Naive thymus-derived CD4-positive, alpha-beta T cell (primary cell): ENCODE measurements at regions of chr2 and their contacts with region 1.

Region 1: GRCh38 chr2:237858294-237859081 is 935 bp upstream of the RAMP1 start:
- DNase-seq: peak in 7 of 9 donors; percentile 26 to 51 (median 44)
- ATAC-seq: peak; percentile 76
- H3K4me3 ChIP-seq: no peak overlapping the region
- H3K4me3 Mint-ChIP-seq: peak overlapping the region; percentile 46 to 86 (median 71)
- H3K27ac ChIP-seq: no peak overlapping the region
- H3K27ac Mint-ChIP-seq: peak overlapping the region in 2 of 9 donors; percentile 72 to 73
- H3K4me1 ChIP-seq: no peaks in the 10 kb centered on the region
- H3K4me1 Mint-ChIP-seq: peaks cover 0 to 15% (median 13%) of the 10 kb centered on the region in 7 donors
- H3K27me3 ChIP-seq: peaks cover 4 to 6% of the 10 kb centered on the region in 2 donors
- H3K27me3 Mint-ChIP-seq: peaks cover 23 to 63% (median 29%) of the 10 kb centered on the region in 5 donors

Region 2: GRCh38 chr2:237758185-237758584 is 100.3 kb before region 1 on chr2:
- CTCF ChIA-PET with region 1: no interaction called
- POLR2A ChIA-PET with region 1: no interaction called
- intact Hi-C with region 1: no loop called
- DNase-seq: no peak
- ATAC-seq: no peak
- H3K4me3 ChIP-seq: no peak overlapping the region
- H3K4me3 Mint-ChIP-seq: no peak overlapping the region
- H3K27ac ChIP-seq: no peak overlapping the region
- H3K27ac Mint-ChIP-seq: no peak overlapping the region
- H3K4me1 ChIP-seq: no peaks in the 10 kb centered on the region
- H3K4me1 Mint-ChIP-seq: peaks cover 0 to 10% (median 6%) of the 10 kb centered on the region in 7 donors
- H3K27me3 ChIP-seq: no peaks in the 10 kb centered on the region
- H3K27me3 Mint-ChIP-seq: no peaks in the 10 kb centered on the region

Region 3: DNA sequence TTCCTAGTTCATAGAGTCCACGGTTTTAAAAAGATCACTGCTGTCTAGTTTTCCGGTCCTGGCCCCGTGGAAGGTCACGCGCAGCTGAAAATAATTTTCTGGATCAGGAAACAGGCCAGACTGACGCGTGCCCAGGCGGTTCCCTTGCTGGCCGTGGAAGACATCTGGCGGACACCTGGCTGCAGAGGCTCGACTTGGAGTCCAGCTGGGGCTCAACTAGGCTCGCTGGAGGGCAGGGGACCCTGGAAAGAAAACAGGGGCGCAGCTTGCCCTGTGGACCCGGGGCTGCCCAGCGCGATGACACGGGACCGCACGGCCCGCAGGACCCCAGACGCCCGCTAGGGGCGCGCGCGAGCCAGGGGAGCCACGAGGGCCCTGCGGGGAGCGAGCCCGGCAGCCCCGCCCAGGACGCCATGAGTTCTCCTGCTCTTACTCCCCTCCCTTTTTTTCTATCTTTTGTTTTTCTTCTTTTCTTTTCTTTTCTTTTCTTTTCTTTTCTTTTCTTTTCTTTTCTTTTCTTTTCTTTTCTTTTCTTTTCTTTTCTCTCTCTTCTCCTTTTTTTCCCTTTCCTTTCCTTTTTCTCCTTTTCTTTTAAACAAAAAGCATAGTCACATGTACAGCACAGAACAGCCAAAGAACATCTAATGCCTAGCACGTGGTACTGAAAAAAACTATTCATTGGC is 65.1 kb after region 1 on chr2:
- CTCF ChIA-PET with region 1: no interaction called
- POLR2A ChIA-PET with region 1: no interaction called
- intact Hi-C with region 1: loop called in 1 of 2 experiments (anchors 2 kb)
- DNase-seq: peak; percentile 57 to 90 (median 79)
- ATAC-seq: peak; percentile 99
- H3K4me3 ChIP-seq: peak overlapping the region; percentile 55
- H3K4me3 Mint-ChIP-seq: peak overlapping the region; percentile 37 to 81 (median 68)
- H3K27ac ChIP-seq: peak overlapping the region; percentile 20
- H3K27ac Mint-ChIP-seq: peak overlapping the region in 8 of 9 donors; percentile 16 to 86 (median 56)
- H3K4me1 ChIP-seq: no peaks in the 10 kb centered on the region
- H3K4me1 Mint-ChIP-seq: peaks cover 11 to 42% (median 31%) of the 10 kb centered on the region in 7 donors
- H3K27me3 ChIP-seq: no peaks in the 10 kb centered on the region
- H3K27me3 Mint-ChIP-seq: peaks cover 0 to 2% (median 0%) of the 10 kb centered on the region in 5 donors

Region 4: DNA sequence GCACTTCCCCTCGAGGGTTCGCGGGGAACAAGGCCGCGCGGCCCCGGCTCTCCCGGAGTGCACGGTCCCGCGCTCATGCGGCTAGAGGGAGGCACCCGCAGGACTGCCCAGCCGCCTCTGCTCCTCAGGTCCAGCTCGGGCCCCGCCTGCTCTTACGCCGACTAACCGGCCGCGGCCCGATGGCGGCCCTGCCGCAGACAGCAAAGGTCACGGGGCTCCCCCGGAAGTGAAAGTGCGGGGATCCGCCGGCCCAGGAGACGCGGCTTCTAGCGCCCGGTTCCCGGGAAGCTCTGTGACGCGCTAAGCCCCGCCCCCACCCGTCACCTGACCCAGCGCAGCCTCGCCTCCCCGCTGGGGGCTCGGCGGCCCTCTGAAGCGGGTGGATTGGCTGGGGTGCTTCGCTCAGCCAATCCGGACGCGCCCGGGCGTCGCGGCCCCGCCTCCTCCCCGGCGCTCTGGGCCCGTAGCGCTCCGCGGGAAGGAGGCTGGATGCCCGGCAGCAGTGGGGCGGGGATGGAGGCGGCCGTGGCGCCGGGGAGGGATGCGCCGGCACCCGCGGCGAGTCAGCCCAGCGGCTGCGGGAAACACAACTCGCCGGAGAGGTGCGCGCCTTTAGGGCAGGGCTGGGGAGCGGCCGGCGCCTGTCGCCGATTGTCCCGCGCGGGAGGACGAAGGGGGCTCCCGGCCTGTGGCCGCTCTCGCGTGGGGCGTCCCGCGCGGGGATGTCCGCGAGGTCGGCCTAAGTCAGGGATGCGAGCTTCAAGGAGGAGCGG is 202.2 kb after region 1 on chr2 and contains the start of gene SCLY:
- CTCF ChIA-PET with region 1: interaction called, 3 read pairs
- POLR2A ChIA-PET with region 1: interaction called, 3 read pairs
- intact Hi-C with region 1: loop called in 1 of 2 experiments (anchors 1 kb)
- DNase-seq: peak; percentile 86 to 95 (median 93)
- ATAC-seq: peak; percentile 99
- H3K4me3 ChIP-seq: peak within 1 kb of the TSS; percentile 96
- H3K4me3 Mint-ChIP-seq: peak within 1 kb of the TSS; percentile 85 to 98 (median 88)
- H3K27ac ChIP-seq: peak within 1 kb of the TSS; percentile 85
- H3K27ac Mint-ChIP-seq: peak within 1 kb of the TSS; percentile 80 to 93 (median 90)
- H3K4me1 ChIP-seq: peaks cover 5 to 12% of the 10 kb centered on the region in 2 donors
- H3K4me1 Mint-ChIP-seq: peaks cover 24 to 57% (median 37%) of the 10 kb centered on the region in 7 donors
- H3K27me3 ChIP-seq: peaks cover 0 to 3% of the 10 kb centered on the region in 2 donors
- H3K27me3 Mint-ChIP-seq: peaks cover 3 to 16% (median 13%) of the 10 kb centered on the region in 5 donors
- total RNA-seq, gene SCLY: 16.1 to 47.3 (median 29.1) TPM

Region 5: GRCh38 chr2:238158527-238159070 is 300.1 kb after region 1 on chr2 and contains the start of gene ERFE:
- CTCF ChIA-PET with region 1: interaction called, 3 read pairs
- POLR2A ChIA-PET with region 1: no interaction called
- intact Hi-C with region 1: loop called in 1 of 2 experiments (anchors 5 kb)
- DNase-seq: peak in 8 of 9 donors; percentile 16 to 74 (median 40)
- ATAC-seq: peak; percentile 80
- H3K4me3 ChIP-seq: no peak within 1 kb of the TSS
- H3K4me3 Mint-ChIP-seq: peak within 1 kb of the TSS; percentile 54 to 79 (median 72)
- H3K27ac ChIP-seq: no peak within 1 kb of the TSS
- H3K27ac Mint-ChIP-seq: no peak within 1 kb of the TSS
- H3K4me1 ChIP-seq: peaks cover 0 to 11% of the 10 kb centered on the region in 2 donors
- H3K4me1 Mint-ChIP-seq: peaks cover 0 to 9% (median 6%) of the 10 kb centered on the region in 7 donors
- H3K27me3 ChIP-seq: no peaks in the 10 kb centered on the region
- H3K27me3 Mint-ChIP-seq: peaks cover 7 to 26% (median 13%) of the 10 kb centered on the region in 5 donors
- total RNA-seq, gene ERFE: 0.29 to 0.31 TPM in 2 of 5 experiments, not detected in the others

Region 6: GRCh38 chr2:238263204-238264071 is 404.9 kb after region 1 on chr2:
- CTCF ChIA-PET with region 1: interaction called, 12 read pairs
- POLR2A ChIA-PET with region 1: interaction called, 3 read pairs
- intact Hi-C with region 1: loop called (anchors 1 kb)
- DNase-seq: peak; percentile 55 to 71 (median 67)
- ATAC-seq: peak; percentile 75
- H3K4me3 ChIP-seq: no peak overlapping the region
- H3K4me3 Mint-ChIP-seq: no peak overlapping the region
- H3K27ac ChIP-seq: no peak overlapping the region
- H3K27ac Mint-ChIP-seq: peak overlapping the region in 3 of 9 donors; percentile 57 to 80 (median 68)
- H3K4me1 ChIP-seq: no peaks in the 10 kb centered on the region
- H3K4me1 Mint-ChIP-seq: peaks cover 4 to 23% (median 6%) of the 10 kb centered on the region in 7 donors
- H3K27me3 ChIP-seq: no peaks in the 10 kb centered on the region
- H3K27me3 Mint-ChIP-seq: no peaks in the 10 kb centered on the region